ENCODE measurements at regions of chr6 and their contacts with region 1.

Region 1: DNA sequence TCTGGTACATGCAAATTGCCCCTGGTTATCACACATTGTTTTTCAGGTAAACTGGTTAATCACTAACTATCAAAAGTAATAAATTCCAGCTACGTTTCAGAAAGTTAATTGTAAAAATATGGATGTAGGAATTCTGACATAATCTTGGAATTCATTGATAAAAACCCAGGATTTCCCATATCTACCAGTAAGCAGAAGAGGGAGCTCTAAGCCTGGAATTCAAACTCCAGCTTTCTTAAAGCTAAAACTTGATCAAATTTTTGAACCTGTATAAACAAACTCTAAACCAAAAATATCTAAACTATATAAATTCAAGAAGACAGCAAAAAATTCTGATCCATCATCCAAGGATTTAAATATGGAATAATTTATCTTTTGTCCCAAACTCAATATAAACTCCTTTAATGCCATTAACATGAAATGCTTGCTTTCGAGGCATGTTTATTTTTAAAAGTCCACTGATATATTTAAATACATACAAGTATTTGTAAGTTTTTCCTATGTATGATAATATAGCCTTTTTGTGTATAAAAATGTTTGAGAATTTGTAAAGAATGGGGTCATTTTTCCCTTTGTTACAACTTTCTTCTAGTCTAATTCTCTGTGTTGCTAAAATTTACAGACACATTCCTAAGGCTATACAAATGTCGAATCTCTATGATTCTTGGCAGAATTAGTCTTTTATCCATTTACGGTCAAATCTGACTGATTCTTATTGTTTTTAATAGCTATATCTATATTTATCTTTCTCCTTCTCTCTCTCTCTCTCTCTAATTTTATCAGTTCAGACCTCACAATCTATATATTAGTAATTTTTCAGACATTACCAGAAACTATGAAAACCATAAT is 91.4 kb upstream of the RNF217 start:
- DNase-seq: no peak
- H3K4me3 ChIP-seq: peak overlapping the region in 1 of 2 donors; percentile 7
- H3K27ac ChIP-seq: no peak overlapping the region
- H3K4me1 ChIP-seq: no peaks in the 10 kb centered on the region
- H3K27me3 ChIP-seq: no peaks in the 10 kb centered on the region
- CTCF ChIP-seq: peak; percentile 58 to 83 (median 64)

Region 2: GRCh38 chr6:125001684-125002405 is 131.0 kb after region 1 on chr6:
- intact Hi-C with region 1: no loop called
- DNase-seq: no peak
- H3K4me3 ChIP-seq: peak overlapping the region; percentile 52 to 55
- H3K27ac ChIP-seq: peak overlapping the region; percentile 40 to 69
- H3K4me1 ChIP-seq: peaks cover 0 to 18% of the 10 kb centered on the region in 2 donors
- H3K27me3 ChIP-seq: no peaks in the 10 kb centered on the region
- CTCF ChIP-seq: no peak

Region 3: GRCh38 chr6:125114248-125114858 is 243.5 kb after region 1 on chr6:
- intact Hi-C with region 1: loop called (anchors 1 kb)
- DNase-seq: peak in 1 of 2 donors; percentile 79
- H3K4me3 ChIP-seq: no peak overlapping the region
- H3K27ac ChIP-seq: no peak overlapping the region
- H3K4me1 ChIP-seq: no peaks in the 10 kb centered on the region
- H3K27me3 ChIP-seq: no peaks in the 10 kb centered on the region
- CTCF ChIP-seq: peak; percentile 36 to 85 (median 82)

Region 4: GRCh38 chr6:125779924-125780539 is 909.2 kb after region 1 on chr6:
- intact Hi-C with region 1: loop called (anchors 10 kb)
- DNase-seq: peak; percentile 47 to 94
- H3K4me3 ChIP-seq: peak overlapping the region; percentile 56 to 85
- H3K27ac ChIP-seq: peak overlapping the region; percentile 90 to 98
- H3K4me1 ChIP-seq: peaks cover 0 to 6% of the 10 kb centered on the region in 2 donors
- H3K27me3 ChIP-seq: no peaks in the 10 kb centered on the region
- CTCF ChIP-seq: peak in 2 of 3 experiments; percentile 31 to 53